ENCODE measurements at regions of chr19 and their contacts with region 1.

Region 1: GRCh38 chr19:45178262-45179071 is at the start of gene BLOC1S3:
- DNase-seq: peak; percentile 97
- ATAC-seq: peak; percentile 87
- H3K4me3 Mint-ChIP-seq: peak within 1 kb of the TSS; percentile 94
- H3K27ac Mint-ChIP-seq: peak within 1 kb of the TSS; percentile 96
- H3K4me1 Mint-ChIP-seq: peaks cover 51% of the 10 kb centered on the region
- H3K27me3 Mint-ChIP-seq: no peaks in the 10 kb centered on the region
- CTCF ChIP-seq: no peak
- total RNA-seq, gene BLOC1S3: 15.6 and 16.5 TPM in 2 replicates

Region 2: DNA sequence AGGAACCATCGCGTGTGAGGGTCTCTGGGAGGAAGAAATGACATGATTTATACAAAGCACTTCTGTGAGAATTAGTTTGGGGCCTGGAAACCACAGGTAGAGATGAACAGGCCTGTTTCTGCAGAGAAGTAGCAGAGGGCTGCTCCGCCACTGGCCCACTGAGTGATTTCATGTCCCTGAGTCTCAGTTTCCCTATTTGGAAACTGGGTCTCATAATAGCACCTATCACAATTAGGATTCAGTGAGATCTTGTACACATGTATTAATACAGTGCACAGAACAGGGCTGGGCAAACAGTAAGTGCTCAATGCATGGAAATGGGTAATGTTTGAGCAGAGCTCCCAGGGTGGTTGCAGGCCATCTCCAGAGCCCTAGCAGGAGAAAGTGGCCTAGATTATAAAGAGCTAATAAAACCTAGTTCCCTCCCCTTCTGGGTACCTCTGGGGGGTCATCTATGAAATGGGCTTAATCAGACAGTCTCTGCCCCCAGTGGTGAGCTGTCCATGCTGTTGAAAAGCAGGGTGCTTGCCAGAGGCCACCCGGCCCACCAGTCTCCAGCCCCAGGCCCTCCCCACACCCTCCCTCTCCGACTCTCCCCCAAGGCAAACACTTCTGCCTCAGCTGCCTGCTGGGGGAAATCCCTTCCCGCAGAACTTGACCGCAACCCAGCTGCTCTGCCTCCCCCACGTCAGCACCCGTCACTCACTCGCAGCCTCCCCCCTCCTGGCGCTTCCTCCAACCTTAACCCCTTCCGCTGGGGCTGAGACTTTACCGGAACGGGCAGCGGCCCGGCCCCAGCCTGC is 425.4 kb before region 1 on chr19:
- CTCF ChIA-PET with region 1: no interaction called
- POLR2A ChIA-PET with region 1: interaction called, 5 read pairs
- intact Hi-C with region 1: loop called (anchors 5 kb)
- DNase-seq: peak; percentile 87
- ATAC-seq: peak; percentile 76
- H3K4me3 Mint-ChIP-seq: peak overlapping the region; percentile 95
- H3K27ac Mint-ChIP-seq: peak overlapping the region; percentile 96
- H3K4me1 Mint-ChIP-seq: peaks cover 68% of the 10 kb centered on the region
- H3K27me3 Mint-ChIP-seq: no peaks in the 10 kb centered on the region
- CTCF ChIP-seq: no peak

Region 3: GRCh38 chr19:45001087-45001739 is 177.3 kb before region 1 on chr19 and contains the start of gene RELB:
- CTCF ChIA-PET with region 1: no interaction called
- POLR2A ChIA-PET with region 1: interaction called, 17 read pairs
- intact Hi-C with region 1: loop called (anchors 1 kb)
- DNase-seq: peak; percentile 99
- ATAC-seq: peak; percentile 43
- H3K4me3 Mint-ChIP-seq: peak within 1 kb of the TSS; percentile 98
- H3K27ac Mint-ChIP-seq: peak within 1 kb of the TSS; percentile 99
- H3K4me1 Mint-ChIP-seq: peaks cover 36% of the 10 kb centered on the region
- H3K27me3 Mint-ChIP-seq: no peaks in the 10 kb centered on the region
- CTCF ChIP-seq: no peak
- total RNA-seq, gene RELB: 117 and 135 TPM in 2 replicates

Region 4: DNA sequence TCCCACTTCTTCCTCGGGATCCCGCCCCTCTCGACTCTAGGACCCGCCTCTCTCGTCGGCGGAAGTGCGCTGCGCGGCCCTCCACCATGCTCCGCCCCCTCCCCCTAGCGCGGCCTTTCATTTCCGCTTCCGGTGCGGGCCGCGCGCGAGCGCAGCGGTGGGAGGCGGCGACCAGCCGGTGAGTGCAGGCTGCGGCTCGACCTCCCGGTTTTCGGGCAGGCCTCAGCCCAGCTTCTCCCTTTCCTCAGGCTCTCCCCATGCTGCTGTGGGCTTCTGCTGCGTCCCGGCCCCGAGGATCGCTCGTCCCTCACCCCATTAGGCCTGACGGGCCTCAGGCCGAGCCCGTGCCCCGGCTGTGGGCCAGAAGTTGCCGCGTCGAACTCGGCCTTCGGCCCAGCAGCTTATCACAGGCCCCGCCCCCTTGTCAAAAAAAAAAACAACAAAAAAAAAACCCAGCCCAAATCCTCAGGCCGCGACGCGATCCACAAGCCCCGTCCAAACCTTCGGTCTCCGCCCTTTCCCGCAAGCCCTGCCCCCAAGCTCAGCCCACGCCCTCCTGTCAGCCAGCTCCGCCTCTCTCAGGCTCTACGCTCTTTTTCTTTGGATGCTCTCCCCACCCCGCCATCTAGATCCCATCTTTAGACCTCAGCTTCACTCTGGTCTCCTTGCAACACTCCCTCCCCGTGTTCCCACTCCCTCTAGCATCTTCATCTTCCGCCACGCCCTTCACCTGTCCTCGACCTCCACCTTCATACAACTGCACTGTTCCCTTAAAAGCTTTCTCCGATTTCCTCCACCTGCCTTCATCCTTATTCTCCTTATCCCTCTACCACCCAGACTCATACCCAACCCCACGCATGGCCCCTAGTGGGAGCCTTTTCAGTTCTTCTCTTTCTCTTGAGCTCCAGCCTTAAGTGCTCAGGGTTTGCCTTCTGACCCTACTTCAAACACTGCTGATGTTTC is 139.3 kb before region 1 on chr19 and contains the start of gene CLASRP:
- CTCF ChIA-PET with region 1: no interaction called
- POLR2A ChIA-PET with region 1: interaction called, 5 read pairs
- intact Hi-C with region 1: loop called (anchors 1 kb)
- DNase-seq: peak; percentile 90
- ATAC-seq: peak; percentile 89
- H3K4me3 Mint-ChIP-seq: peak within 1 kb of the TSS; percentile 98
- H3K27ac Mint-ChIP-seq: peak within 1 kb of the TSS; percentile 91
- H3K4me1 Mint-ChIP-seq: peaks cover 38% of the 10 kb centered on the region
- H3K27me3 Mint-ChIP-seq: no peaks in the 10 kb centered on the region
- CTCF ChIP-seq: no peak
- total RNA-seq, gene CLASRP: 133 and 172 TPM in 2 replicates

Region 5: GRCh38 chr19:45092747-45093678 is 85.5 kb before region 1 on chr19 and contains the start of gene PPP1R37:
- CTCF ChIA-PET with region 1: interaction called, 11 read pairs
- POLR2A ChIA-PET with region 1: interaction called, 53 read pairs
- intact Hi-C with region 1: loop called (anchors 1 kb)
- DNase-seq: peak; percentile 81
- ATAC-seq: peak; percentile 69
- H3K4me3 Mint-ChIP-seq: peak within 1 kb of the TSS; percentile 93
- H3K27ac Mint-ChIP-seq: peak within 1 kb of the TSS; percentile 99
- H3K4me1 Mint-ChIP-seq: peaks cover 54% of the 10 kb centered on the region
- H3K27me3 Mint-ChIP-seq: no peaks in the 10 kb centered on the region
- CTCF ChIP-seq: no peak
- total RNA-seq, gene PPP1R37: 18.8 and 27.2 TPM in 2 replicates

Region 6: GRCh38 chr19:45164577-45165335 is 13.7 kb before region 1 on chr19:
- CTCF ChIA-PET with region 1: interaction called, 3 read pairs
- POLR2A ChIA-PET with region 1: interaction called, 20 read pairs
- intact Hi-C with region 1: loop called (anchors 2 kb)
- DNase-seq: peak; percentile 49
- ATAC-seq: peak; percentile 85
- H3K4me3 Mint-ChIP-seq: peak overlapping the region; percentile 24
- H3K27ac Mint-ChIP-seq: no peak overlapping the region
- H3K4me1 Mint-ChIP-seq: peaks cover 17% of the 10 kb centered on the region
- H3K27me3 Mint-ChIP-seq: peaks cover 8% of the 10 kb centered on the region
- CTCF ChIP-seq: no peak

Region 7: GRCh38 chr19:45331423-45331822 is 153.0 kb after region 1 on chr19:
- CTCF ChIA-PET with region 1: no interaction called
- POLR2A ChIA-PET with region 1: interaction called, 11 read pairs
- intact Hi-C with region 1: no loop called
- DNase-seq: no peak
- ATAC-seq: no peak
- H3K4me3 Mint-ChIP-seq: no peak overlapping the region
- H3K27ac Mint-ChIP-seq: no peak overlapping the region
- H3K4me1 Mint-ChIP-seq: peaks cover under 1% of the 10 kb centered on the region
- H3K27me3 Mint-ChIP-seq: peaks cover 11% of the 10 kb centered on the region
- CTCF ChIP-seq: no peak

Measured in activated B cell treated with CpG ODN at 0.5 μM for 24 hours (primary cell).